CD4-positive, alpha-beta T cell (primary cell): ENCODE measurements at regions of chr1 and their contacts with region 1.

Region 1: DNA sequence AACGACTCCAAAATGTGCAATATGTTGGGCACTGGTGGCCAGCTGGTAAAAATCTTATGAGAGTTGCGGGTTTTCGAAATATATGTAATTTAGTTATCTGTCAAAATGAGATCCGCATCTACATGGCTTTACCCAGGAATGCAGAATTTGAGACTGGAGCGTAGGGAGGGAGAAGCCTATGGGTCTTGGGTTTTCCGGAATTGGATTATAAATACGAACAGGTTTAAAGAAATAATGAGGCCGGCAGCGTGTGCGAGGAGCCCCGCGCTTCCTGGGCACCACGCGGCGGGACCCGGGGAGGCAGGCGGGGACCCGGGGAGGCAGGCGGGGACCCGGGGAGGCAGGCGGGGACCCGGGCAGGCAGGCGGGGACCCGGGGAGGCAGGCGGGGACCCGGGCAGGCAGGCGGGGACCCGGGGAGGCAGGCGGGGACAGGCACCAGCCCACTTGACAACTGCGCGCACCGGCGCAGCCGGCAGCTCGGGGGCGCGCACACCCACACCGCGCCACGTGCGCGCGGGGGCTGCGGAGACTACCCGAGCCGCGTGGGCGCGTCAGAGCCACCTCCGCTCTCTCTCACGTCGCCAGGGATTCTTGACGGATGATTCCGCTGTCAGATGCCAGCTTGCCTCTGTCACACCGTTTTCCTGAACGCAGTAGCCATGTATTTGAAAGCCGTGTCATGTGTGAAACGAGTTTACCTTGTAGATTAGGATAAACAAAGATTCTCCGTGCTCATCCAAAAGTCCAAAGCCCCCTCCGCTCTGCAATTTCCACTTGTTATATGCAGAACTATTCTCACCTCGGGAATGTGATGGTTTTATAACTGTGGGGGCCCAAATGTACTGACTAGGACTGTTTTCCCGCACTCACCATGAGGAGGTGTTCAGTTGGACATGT is 54.3 kb upstream of the HNRNPU start:
- DNase-seq: peak; percentile 22 to 91 (median 66)
- ATAC-seq: peak; percentile 98
- H3K4me3 ChIP-seq: peak overlapping the region; percentile 55
- H3K4me3 Mint-ChIP-seq: peak overlapping the region; percentile 90
- H3K27ac ChIP-seq: no peak overlapping the region
- H3K27ac Mint-ChIP-seq: peak overlapping the region; percentile 56
- H3K4me1 ChIP-seq: peaks cover 7% of the 10 kb centered on the region
- H3K4me1 Mint-ChIP-seq: peaks cover 10% of the 10 kb centered on the region
- H3K27me3 ChIP-seq: no peaks in the 10 kb centered on the region
- H3K27me3 Mint-ChIP-seq: peaks cover 16% of the 10 kb centered on the region
- CTCF ChIP-seq: no peak

Region 2: DNA sequence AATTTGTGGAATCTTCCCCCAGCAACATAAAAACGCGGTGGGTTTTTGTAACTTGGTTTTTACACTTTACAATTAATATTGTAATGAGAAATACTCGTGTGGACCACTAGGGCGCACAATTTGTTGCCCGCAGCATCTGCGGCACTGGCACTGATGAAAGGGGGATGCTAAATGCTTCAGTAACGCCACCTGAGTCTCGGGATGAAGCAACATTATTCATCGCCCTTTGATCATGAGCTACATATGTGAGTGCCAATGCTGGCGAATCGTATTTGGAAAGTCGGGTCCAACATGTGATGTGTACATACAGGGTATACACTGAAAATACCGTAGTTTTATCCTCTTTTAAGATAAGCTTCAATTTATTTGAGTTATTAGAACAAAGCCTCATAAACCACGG is 117.4 kb before region 1 on chr1:
- CTCF ChIA-PET with region 1: no interaction called
- POLR2A ChIA-PET with region 1: no interaction called
- intact Hi-C with region 1: loop called in 1 of 2 experiments (anchors 10 kb)
- DNase-seq: peak; percentile 23 to 81 (median 46)
- ATAC-seq: peak; percentile 91
- H3K4me3 ChIP-seq: no peak overlapping the region
- H3K4me3 Mint-ChIP-seq: no peak overlapping the region
- H3K27ac ChIP-seq: no peak overlapping the region
- H3K27ac Mint-ChIP-seq: no peak overlapping the region
- H3K4me1 ChIP-seq: peaks cover 3% of the 10 kb centered on the region
- H3K4me1 Mint-ChIP-seq: peaks cover 4% of the 10 kb centered on the region
- H3K27me3 ChIP-seq: no peaks in the 10 kb centered on the region
- H3K27me3 Mint-ChIP-seq: peaks cover 4% of the 10 kb centered on the region
- CTCF ChIP-seq: peak; percentile 83

Region 3: DNA sequence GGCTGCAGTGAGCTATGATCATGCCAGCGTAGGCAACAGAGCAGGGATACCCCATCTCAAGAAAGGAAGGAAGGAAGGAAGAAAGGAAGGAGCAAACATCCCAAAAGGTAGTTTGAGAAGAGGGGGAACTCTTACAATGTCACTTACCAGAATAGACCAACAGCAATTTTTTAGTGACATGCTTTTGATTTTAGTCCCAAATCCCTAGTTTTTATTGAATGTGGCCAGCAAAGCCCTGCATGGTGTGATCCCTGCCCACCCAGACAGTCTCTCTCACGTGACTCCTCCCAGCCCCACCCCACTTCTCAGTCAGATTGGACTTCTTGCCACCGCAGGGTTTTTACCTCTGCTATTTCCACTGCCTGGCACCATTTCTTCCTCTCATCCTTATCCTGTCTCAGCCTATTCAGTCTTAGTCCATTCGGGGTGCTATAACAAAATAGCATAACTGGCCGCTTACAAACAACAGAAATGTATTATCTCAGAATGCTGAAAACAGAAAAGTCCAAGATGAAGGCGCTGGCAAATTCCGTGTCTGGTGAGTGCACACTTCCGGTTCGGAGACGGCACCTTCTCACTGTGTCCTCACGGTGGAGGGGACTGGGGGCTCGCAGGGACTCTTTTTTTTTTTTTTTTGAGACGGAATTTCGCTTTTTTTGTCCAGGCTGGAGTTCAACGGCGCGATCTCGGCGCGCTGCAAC is 14.4 kb before region 1 on chr1:
- CTCF ChIA-PET with region 1: no interaction called
- POLR2A ChIA-PET with region 1: no interaction called
- intact Hi-C with region 1: no loop called
- DNase-seq: no peak
- ATAC-seq: no peak
- H3K4me3 ChIP-seq: no peak overlapping the region
- H3K4me3 Mint-ChIP-seq: no peak overlapping the region
- H3K27ac ChIP-seq: no peak overlapping the region
- H3K27ac Mint-ChIP-seq: no peak overlapping the region
- H3K4me1 ChIP-seq: no peaks in the 10 kb centered on the region
- H3K4me1 Mint-ChIP-seq: no peaks in the 10 kb centered on the region
- H3K27me3 ChIP-seq: no peaks in the 10 kb centered on the region
- H3K27me3 Mint-ChIP-seq: no peaks in the 10 kb centered on the region
- CTCF ChIP-seq: no peak

Region 4: DNA sequence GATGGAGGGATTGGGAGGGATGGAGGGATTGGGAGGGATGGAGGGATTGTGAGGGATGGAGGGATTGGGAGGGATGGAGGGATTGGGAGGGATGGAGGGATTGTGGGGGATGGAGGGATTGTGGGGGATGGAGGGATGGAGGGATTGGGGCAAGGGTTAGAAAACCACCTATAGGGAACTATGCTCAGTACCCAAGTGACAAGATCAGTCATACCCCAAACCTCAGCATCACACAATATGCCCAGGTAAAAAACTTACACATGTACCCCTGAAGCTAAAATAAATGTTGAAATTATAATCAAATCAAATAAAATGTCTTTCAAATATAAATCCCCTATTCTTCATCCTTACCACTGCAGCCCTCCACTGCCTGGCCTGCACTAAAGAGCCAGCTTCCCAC is 18.4 kb after region 1 on chr1:
- CTCF ChIA-PET with region 1: no interaction called
- POLR2A ChIA-PET with region 1: no interaction called
- intact Hi-C with region 1: no loop called
- DNase-seq: no peak
- ATAC-seq: no peak
- H3K4me3 ChIP-seq: no peak overlapping the region
- H3K4me3 Mint-ChIP-seq: no peak overlapping the region
- H3K27ac ChIP-seq: no peak overlapping the region
- H3K27ac Mint-ChIP-seq: no peak overlapping the region
- H3K4me1 ChIP-seq: no peaks in the 10 kb centered on the region
- H3K4me1 Mint-ChIP-seq: no peaks in the 10 kb centered on the region
- H3K27me3 ChIP-seq: no peaks in the 10 kb centered on the region
- H3K27me3 Mint-ChIP-seq: no peaks in the 10 kb centered on the region
- CTCF ChIP-seq: no peak

Region 5: DNA sequence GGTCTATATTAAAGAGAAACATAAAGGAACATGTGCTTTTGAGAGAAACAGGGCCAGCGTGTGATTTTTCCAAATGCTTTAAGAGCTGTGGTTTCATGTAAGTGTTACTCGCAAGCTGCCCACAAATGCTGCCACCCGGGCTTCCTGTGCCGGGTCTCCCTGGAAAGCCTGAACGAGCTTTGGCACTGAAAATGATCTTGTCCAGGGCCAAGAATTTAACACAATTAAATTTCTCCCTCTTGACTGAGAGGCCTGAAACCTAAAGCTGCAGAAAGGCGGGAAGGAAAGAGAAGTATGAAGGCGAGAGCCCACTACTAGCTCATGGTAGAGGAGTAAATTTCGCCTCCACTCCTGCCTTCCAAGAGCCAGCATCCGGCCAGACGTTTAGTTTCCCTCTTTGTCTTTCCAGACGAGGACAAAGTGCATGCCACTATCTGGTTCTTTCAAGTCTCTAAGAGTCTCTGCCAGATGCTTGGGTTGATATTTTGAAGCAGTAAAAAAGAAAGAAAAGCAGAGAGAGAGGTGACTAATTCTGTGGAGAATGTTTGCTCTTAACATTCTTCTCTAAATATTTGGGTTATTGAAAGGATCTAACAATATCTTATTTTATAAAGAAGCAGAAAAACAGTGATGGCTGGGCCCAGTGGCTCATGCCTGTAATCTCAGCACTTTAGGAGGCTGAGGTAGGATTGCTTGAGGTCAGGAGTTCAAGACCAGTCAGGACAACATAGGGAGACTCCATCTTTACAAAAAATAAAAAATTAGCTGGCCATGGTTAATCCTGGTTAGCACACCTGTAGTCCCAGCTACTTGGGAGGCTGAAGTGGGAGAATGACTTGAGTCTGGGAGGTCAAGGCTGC is 45.7 kb after region 1 on chr1:
- CTCF ChIA-PET with region 1: interaction called, 4 read pairs
- POLR2A ChIA-PET with region 1: interaction called, 23 read pairs
- intact Hi-C with region 1: loop called (anchors 2 kb)
- DNase-seq: peak in 5 of 14 experiments; percentile 12 to 48 (median 20)
- ATAC-seq: no peak
- H3K4me3 ChIP-seq: no peak overlapping the region
- H3K4me3 Mint-ChIP-seq: no peak overlapping the region
- H3K27ac ChIP-seq: no peak overlapping the region
- H3K27ac Mint-ChIP-seq: no peak overlapping the region
- H3K4me1 ChIP-seq: peaks cover 8% of the 10 kb centered on the region
- H3K4me1 Mint-ChIP-seq: peaks cover 27% of the 10 kb centered on the region
- H3K27me3 ChIP-seq: no peaks in the 10 kb centered on the region
- H3K27me3 Mint-ChIP-seq: no peaks in the 10 kb centered on the region
- CTCF ChIP-seq: no peak